ENCODE measurements at regions of chr15 and their contacts with region 1.

Region 1: GRCh38 chr15:90931737-90932659 is at the start of gene HDDC3:
- DNase-seq: peak; percentile 75 to 95 (median 90)
- ATAC-seq: peak; percentile 58
- H3K4me3 ChIP-seq: peak within 1 kb of the TSS; percentile 89 to 95
- H3K4me3 Mint-ChIP-seq: peak within 1 kb of the TSS; percentile 99
- H3K27ac ChIP-seq: peak within 1 kb of the TSS; percentile 78 to 87
- H3K27ac Mint-ChIP-seq: peak within 1 kb of the TSS; percentile 99
- H3K4me1 ChIP-seq: peaks cover 55% of the 10 kb centered on the region
- H3K4me1 Mint-ChIP-seq: peaks cover 49% of the 10 kb centered on the region
- H3K27me3 ChIP-seq: no peaks in the 10 kb centered on the region
- H3K27me3 Mint-ChIP-seq: no peaks in the 10 kb centered on the region
- CTCF ChIP-seq: peak; percentile 96
- total RNA-seq, gene HDDC3: 5.1 to 6.0 TPM

Region 2: DNA sequence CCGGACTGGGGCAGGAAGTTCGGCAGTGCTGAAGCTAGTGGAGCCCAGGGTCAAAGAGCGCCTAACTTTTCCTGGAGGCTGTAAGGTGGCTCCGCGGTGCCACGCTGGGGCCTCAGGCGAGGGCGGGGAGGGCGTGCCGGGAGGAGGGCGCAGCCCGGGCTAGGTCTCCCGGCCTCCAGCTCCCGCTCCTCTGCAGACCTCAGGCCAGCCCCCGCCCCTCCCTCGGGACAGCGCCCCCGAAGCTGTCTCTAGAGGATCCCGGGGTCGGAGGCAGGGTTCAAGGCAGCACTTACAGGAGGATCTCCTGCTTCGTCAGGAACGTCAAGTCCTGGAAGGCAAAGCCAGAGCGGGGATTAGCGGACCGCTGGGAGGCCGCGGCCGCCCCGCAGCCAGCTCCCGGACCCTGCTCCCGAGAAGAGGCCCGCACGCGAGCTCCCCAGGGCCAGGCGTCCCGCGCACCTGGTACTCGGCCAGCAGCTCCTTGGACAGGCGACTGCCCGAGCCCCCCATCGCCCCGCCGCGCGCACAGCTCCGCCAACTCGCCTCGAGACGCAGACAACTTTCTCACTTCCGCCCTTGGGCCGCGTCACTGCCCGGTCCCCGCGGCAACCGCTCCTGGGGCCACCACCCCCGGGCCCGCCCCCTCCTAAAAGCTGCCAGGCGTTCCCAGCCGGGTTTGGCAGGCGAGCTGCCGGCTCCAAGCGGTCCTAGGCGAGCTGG is 698.5 kb before region 1 on chr15 and contains the start of gene CIB1:
- CTCF ChIA-PET with region 1: interaction called, 4 read pairs
- POLR2A ChIA-PET with region 1: no interaction called
- intact Hi-C with region 1: loop called (anchors 2 kb)
- DNase-seq: peak in 8 of 9 experiments; percentile 32 to 98 (median 94)
- ATAC-seq: peak; percentile 76
- H3K4me3 ChIP-seq: peak within 1 kb of the TSS; percentile 73 to 86
- H3K4me3 Mint-ChIP-seq: peak within 1 kb of the TSS; percentile 94
- H3K27ac ChIP-seq: peak within 1 kb of the TSS; percentile 93
- H3K27ac Mint-ChIP-seq: peak within 1 kb of the TSS; percentile 98
- H3K4me1 ChIP-seq: peaks cover 47% of the 10 kb centered on the region
- H3K4me1 Mint-ChIP-seq: peaks cover 60% of the 10 kb centered on the region
- H3K27me3 ChIP-seq: no peaks in the 10 kb centered on the region
- H3K27me3 Mint-ChIP-seq: no peaks in the 10 kb centered on the region
- CTCF ChIP-seq: no peak
- total RNA-seq, gene CIB1: 251 to 268 TPM

Region 3: DNA sequence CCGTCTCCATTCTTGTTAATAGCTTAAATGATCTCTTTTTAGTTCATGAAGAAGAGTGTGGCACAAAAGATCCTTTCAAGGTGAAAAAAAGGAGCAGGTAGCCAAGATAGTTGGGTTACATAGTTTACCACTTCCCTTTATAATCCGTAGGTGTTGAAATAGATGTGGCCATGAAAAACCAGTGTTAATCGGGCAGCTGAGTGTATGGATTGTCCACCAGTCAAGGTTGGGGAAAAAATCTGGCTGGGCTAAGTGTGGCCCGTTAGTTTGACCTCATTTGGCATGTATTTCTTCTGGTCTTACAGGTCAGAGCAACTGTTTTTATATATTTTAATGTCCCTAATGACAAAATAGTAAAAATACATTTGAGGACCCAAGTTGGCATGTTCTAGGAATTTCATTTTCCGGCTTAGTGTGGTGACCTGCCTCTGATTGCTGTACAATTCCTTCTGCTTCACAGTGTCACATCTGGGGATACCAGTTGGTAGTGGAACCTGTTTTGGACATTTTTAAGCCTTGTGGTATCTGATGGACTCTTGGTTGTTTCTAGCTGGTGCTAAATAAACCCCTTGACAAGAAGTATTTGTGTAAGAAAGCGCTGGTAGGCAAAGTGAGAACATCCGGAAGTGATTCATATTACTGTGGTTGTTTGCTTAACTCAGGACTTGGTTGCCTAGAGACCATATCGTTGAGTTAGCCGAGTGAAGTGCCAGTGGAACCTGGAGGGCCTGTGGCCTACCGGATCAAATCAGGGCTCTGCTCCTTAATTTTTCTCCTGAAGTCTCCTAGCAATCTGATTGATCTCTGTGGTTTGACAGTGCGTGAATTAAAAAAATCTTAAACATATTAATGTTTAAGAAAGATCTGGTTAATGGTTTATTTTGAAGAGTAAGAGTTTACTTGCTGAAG is 531.3 kb before region 1 on chr15:
- CTCF ChIA-PET with region 1: no interaction called
- POLR2A ChIA-PET with region 1: no interaction called
- intact Hi-C with region 1: loop called in 1 of 2 experiments (anchors 5 kb)
- DNase-seq: peak; percentile 34 to 96 (median 64)
- ATAC-seq: peak; percentile 91
- H3K4me3 ChIP-seq: peak overlapping the region in 1 of 2 experiments; percentile 18
- H3K4me3 Mint-ChIP-seq: peak overlapping the region; percentile 69
- H3K27ac ChIP-seq: peak overlapping the region; percentile 74 to 96
- H3K27ac Mint-ChIP-seq: peak overlapping the region; percentile 96
- H3K4me1 ChIP-seq: peaks cover 36% of the 10 kb centered on the region
- H3K4me1 Mint-ChIP-seq: peaks cover 66% of the 10 kb centered on the region
- H3K27me3 ChIP-seq: no peaks in the 10 kb centered on the region
- H3K27me3 Mint-ChIP-seq: no peaks in the 10 kb centered on the region
- CTCF ChIP-seq: no peak

Region 4: DNA sequence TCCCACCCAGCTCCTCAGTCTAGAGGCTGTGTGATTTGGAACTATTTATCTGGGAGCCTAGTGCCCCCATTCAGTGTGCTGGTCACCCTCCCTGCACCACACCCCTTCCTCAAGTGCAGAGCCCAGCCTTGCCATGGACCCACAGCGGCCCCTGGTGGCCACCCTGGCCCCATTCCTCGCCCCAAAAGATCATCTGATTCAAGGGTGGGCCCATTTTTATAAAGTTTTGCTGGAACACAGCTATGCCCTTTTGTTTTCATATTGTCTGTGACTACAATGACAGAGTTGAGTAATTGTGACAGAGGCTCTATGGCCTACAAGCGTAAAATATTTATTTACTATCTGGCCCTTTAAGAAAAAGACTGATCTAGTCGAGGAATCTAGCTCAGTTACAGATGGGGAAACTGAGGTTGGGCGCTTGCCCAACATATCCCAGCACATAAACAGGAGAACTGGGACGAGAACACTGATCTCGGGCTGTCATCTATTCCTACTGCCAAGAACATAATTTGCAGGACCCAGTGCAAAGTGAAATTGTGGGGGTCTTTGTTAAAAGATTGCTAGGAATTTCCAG is 45.9 kb before region 1 on chr15:
- CTCF ChIA-PET with region 1: interaction called, 43 read pairs
- POLR2A ChIA-PET with region 1: interaction called, 4 read pairs
- intact Hi-C with region 1: no loop called
- DNase-seq: peak; percentile 59 to 88 (median 78)
- ATAC-seq: peak; percentile 57
- H3K4me3 ChIP-seq: no peak overlapping the region
- H3K4me3 Mint-ChIP-seq: no peak overlapping the region
- H3K27ac ChIP-seq: no peak overlapping the region
- H3K27ac Mint-ChIP-seq: no peak overlapping the region
- H3K4me1 ChIP-seq: peaks cover 10% of the 10 kb centered on the region
- H3K4me1 Mint-ChIP-seq: peaks cover 7% of the 10 kb centered on the region
- H3K27me3 ChIP-seq: peaks cover 0 to 3% of the 10 kb centered on the region in 2 experiments
- H3K27me3 Mint-ChIP-seq: peaks cover 8% of the 10 kb centered on the region
- CTCF ChIP-seq: peak; percentile 98

Region 5: DNA sequence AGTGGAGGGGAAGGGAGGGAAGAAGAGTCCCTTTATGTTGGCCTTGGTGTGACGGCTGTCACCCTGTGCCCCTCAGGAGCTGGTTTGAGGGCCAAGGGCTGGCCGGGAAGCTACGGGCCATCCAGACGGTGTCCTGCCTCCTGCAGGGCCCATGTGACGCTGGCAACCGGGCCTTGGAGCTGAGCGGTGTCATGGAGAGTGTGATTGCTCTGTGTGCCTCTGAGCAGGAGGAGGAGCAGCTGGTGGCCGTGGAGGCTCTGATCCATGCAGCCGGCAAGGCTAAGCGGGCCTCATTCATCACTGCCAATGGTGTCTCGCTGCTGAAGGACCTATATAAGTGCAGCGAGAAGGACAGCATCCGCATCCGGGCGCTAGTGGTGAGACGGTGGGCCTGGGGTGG is 14.5 kb after region 1 on chr15:
- CTCF ChIA-PET with region 1: interaction called, 160 read pairs
- POLR2A ChIA-PET with region 1: interaction called, 3 read pairs
- intact Hi-C with region 1: no loop called
- DNase-seq: no peak
- ATAC-seq: no peak
- H3K4me3 ChIP-seq: no peak overlapping the region
- H3K4me3 Mint-ChIP-seq: no peak overlapping the region
- H3K27ac ChIP-seq: no peak overlapping the region
- H3K27ac Mint-ChIP-seq: no peak overlapping the region
- H3K4me1 ChIP-seq: no peaks in the 10 kb centered on the region
- H3K4me1 Mint-ChIP-seq: no peaks in the 10 kb centered on the region
- H3K27me3 ChIP-seq: no peaks in the 10 kb centered on the region
- H3K27me3 Mint-ChIP-seq: no peaks in the 10 kb centered on the region
- CTCF ChIP-seq: no peak

Region 6: DNA sequence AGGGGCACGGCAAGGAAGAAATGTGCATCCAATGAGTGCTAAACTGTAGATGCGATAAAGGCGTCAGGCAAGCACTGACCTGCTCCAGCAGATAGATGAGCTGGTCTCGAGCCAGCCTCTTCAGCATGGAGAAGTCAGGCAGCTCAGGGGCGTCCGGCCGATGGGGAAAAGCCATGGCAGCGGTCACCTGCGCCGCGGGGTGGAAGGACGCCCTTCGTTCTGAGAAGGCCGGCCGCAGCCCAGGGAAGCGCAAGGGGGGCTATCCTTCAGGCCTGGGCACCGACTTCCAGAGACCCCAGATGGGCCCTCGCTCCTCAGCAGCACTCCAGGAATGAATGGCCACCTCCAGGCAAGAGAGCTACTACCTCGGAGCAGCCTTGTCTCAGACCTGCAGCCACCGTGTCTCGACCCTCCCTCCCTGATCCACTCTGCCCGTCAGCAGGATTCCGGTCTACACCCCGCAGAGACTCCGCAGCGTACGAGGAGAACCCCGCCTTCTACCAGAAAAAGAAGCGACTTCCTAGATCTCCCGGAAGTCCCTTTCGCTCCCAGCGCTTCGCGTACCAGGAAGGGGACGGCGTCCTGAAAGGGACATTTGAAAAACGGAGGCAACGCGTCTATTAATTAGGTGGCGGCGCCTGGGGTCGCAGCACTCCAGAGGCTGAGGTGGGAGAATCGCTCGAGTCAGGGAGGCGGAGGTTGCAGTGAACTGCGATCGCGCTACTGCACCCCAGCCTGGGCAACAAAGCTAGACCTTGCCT is 90.3 kb after region 1 on chr15 and contains the start of gene VPS33B:
- CTCF ChIA-PET with region 1: interaction called, 6 read pairs
- POLR2A ChIA-PET with region 1: interaction called, 4 read pairs
- intact Hi-C with region 1: loop called (anchors 1 to 2 kb)
- DNase-seq: peak; percentile 42 to 92 (median 80)
- ATAC-seq: peak; percentile 89
- H3K4me3 ChIP-seq: peak within 1 kb of the TSS; percentile 85 to 97
- H3K4me3 Mint-ChIP-seq: peak within 1 kb of the TSS; percentile 90
- H3K27ac ChIP-seq: peak within 1 kb of the TSS; percentile 52 to 80
- H3K27ac Mint-ChIP-seq: peak within 1 kb of the TSS; percentile 89
- H3K4me1 ChIP-seq: peaks cover 11% of the 10 kb centered on the region
- H3K4me1 Mint-ChIP-seq: peaks cover 38% of the 10 kb centered on the region
- H3K27me3 ChIP-seq: no peaks in the 10 kb centered on the region
- H3K27me3 Mint-ChIP-seq: no peaks in the 10 kb centered on the region
- CTCF ChIP-seq: no peak
- total RNA-seq, gene VPS33B: 30.1 to 33.0 TPM

Measured in CD8-positive, alpha-beta T cell (primary cell).